ENCODE measurements at regions of chr1 and their contacts with region 1.

Region 1: DNA sequence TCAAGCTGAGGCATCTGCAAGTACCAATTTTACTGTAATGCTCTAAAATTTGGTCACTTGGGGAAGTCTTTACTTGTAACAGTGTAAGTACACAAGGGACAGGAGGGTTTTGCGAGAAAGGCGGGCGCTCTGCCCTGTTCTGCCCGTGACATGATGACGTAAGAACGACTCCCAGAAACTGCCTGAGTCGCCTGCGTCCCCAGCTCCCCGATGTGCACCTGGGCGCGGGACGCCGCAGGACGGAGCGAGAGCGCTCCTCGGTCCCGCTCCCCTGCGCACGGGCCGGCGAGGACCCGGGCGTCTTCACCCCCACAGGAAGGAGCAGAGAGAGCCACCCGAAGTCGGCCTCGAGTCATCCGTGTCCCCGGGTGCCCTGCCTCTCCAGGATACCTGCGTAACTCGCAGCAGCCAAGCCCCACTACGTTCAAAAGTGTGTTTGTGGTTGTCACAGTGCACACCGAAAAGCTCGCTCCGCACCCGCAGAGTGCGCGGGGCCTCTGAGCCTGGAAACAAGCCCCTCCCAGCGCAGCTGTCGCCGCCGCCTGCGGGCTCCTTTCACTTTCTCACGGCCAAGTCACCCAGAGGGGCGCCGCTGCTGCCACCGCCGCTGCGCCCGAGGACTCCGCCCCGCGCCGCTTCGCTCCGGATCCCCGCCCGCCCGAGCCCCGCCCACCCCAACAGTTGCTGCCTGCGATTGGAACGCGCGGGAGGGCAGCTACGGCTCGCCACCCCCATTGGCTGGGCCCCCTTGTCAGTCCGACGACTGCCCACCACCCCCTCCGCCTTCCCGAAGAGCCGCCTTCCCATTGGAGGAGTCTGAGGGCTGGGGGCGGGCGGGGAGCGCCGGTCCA is 3.2 kb upstream of the ZBTB18 start:
- DNase-seq: peak; percentile 95 to 99 (median 97)
- ATAC-seq: peak; percentile 72
- H3K4me3 ChIP-seq: peak overlapping the region; percentile 83
- H3K4me3 Mint-ChIP-seq: peak overlapping the region; percentile 89
- H3K27ac ChIP-seq: peak overlapping the region; percentile 95 to 97
- H3K27ac Mint-ChIP-seq: peak overlapping the region; percentile 98
- H3K4me1 ChIP-seq: peaks cover 40% of the 10 kb centered on the region
- H3K4me1 Mint-ChIP-seq: peaks cover 26% of the 10 kb centered on the region
- H3K27me3 ChIP-seq: no peaks in the 10 kb centered on the region
- H3K27me3 Mint-ChIP-seq: no peaks in the 10 kb centered on the region
- CTCF ChIP-seq: no peak

Region 2: DNA sequence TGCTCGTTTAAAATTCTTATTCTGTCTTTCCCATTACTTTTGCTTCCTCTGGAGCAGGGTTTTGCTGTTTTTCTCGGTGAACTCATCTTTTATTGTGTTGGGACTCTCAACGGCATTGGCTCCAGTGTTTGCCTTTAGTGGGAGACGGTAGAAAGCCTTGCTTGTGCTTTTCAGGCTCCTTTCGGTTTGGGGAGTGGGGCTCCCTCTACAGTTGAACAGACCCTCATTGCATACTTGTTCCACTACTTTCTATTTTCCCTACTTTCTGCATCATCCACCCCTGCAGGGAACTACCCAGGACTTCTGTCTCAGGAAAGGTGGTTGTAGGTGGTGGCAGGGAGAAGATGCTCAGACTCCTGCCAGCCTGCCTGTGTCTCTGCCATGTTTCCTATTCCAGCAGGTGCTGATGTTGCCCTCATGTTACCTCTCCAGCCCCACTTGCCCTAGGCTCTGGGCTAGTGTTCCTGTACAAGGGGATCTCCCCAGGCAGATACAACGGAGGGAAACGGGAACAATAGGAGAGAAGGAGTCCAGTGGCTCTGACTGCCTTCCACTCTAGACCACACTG is 65.3 kb before region 1 on chr1:
- CTCF ChIA-PET with region 1: no interaction called
- POLR2A ChIA-PET with region 1: no interaction called
- intact Hi-C with region 1: loop called in 1 of 2 experiments (anchors 5 kb)
- DNase-seq: no peak
- ATAC-seq: no peak
- H3K4me3 ChIP-seq: no peak overlapping the region
- H3K4me3 Mint-ChIP-seq: no peak overlapping the region
- H3K27ac ChIP-seq: no peak overlapping the region
- H3K27ac Mint-ChIP-seq: no peak overlapping the region
- H3K4me1 ChIP-seq: no peaks in the 10 kb centered on the region
- H3K4me1 Mint-ChIP-seq: no peaks in the 10 kb centered on the region
- H3K27me3 ChIP-seq: no peaks in the 10 kb centered on the region
- H3K27me3 Mint-ChIP-seq: peaks cover 3% of the 10 kb centered on the region
- CTCF ChIP-seq: no peak

Region 3: DNA sequence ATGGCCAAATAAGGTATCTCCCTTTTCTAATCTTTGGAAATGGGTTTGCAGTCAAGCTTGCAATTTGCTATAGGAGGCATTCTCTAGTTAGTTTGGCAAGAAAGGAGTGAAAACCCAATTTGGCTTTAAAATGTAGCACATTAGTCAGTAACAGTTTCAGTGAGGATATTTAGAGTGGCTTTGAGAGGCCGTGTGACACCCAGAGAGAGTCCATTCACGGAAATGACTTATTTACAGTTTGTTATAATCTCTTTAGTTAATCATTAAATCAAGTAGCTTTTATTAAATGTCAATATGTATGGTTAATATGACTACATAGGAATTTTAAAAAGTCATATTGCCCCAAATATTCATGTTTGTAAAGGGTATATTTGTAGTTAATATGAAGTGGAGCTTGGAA is 12.8 kb after region 1 on chr1:
- CTCF ChIA-PET with region 1: interaction called, 4 read pairs
- POLR2A ChIA-PET with region 1: interaction called, 10 read pairs
- intact Hi-C with region 1: no loop called
- DNase-seq: no peak
- ATAC-seq: no peak
- H3K4me3 ChIP-seq: no peak overlapping the region
- H3K4me3 Mint-ChIP-seq: no peak overlapping the region
- H3K27ac ChIP-seq: no peak overlapping the region
- H3K27ac Mint-ChIP-seq: peak overlapping the region; percentile 53
- H3K4me1 ChIP-seq: peaks cover 3% of the 10 kb centered on the region
- H3K4me1 Mint-ChIP-seq: peaks cover 31% of the 10 kb centered on the region
- H3K27me3 ChIP-seq: no peaks in the 10 kb centered on the region
- H3K27me3 Mint-ChIP-seq: no peaks in the 10 kb centered on the region
- CTCF ChIP-seq: no peak

Region 4: DNA sequence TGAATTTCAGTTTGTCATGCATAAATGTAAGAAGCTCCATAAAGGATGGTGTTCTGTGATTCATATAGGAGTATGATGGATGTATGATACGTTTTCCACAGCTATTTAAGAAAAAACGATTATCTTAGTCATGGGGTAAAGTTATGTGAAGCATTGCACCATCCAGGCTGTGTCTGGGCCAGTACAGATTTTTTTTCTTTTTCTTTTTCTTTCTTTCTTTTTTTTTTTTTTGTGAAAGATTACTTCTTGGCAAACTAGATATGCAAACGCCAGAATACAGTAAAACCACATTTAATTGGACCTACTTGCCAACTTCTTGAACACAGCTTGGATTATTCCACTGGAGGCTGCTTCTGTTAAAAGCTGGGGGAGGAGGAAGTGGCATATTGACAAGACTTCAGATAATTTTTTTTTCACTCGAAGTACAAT is 18.1 kb after region 1 on chr1:
- CTCF ChIA-PET with region 1: interaction called, 4 read pairs
- POLR2A ChIA-PET with region 1: interaction called, 17 read pairs
- intact Hi-C with region 1: no loop called
- DNase-seq: no peak
- ATAC-seq: no peak
- H3K4me3 ChIP-seq: no peak overlapping the region
- H3K4me3 Mint-ChIP-seq: no peak overlapping the region
- H3K27ac ChIP-seq: no peak overlapping the region
- H3K27ac Mint-ChIP-seq: no peak overlapping the region
- H3K4me1 ChIP-seq: no peaks in the 10 kb centered on the region
- H3K4me1 Mint-ChIP-seq: peaks cover 11% of the 10 kb centered on the region
- H3K27me3 ChIP-seq: no peaks in the 10 kb centered on the region
- H3K27me3 Mint-ChIP-seq: no peaks in the 10 kb centered on the region
- CTCF ChIP-seq: no peak

Region 5: GRCh38 chr1:244074559-244075171 is 26.8 kb after region 1 on chr1:
- CTCF ChIA-PET with region 1: interaction called, 12 read pairs
- POLR2A ChIA-PET with region 1: interaction called, 96 read pairs
- intact Hi-C with region 1: loop called (anchors 1 kb)
- DNase-seq: peak; percentile 47 to 92 (median 74)
- ATAC-seq: peak; percentile 90
- H3K4me3 ChIP-seq: peak overlapping the region; percentile 38 to 41
- H3K4me3 Mint-ChIP-seq: peak overlapping the region; percentile 80
- H3K27ac ChIP-seq: peak overlapping the region; percentile 66 to 67
- H3K27ac Mint-ChIP-seq: peak overlapping the region; percentile 98
- H3K4me1 ChIP-seq: peaks cover 31% of the 10 kb centered on the region
- H3K4me1 Mint-ChIP-seq: peaks cover 45% of the 10 kb centered on the region
- H3K27me3 ChIP-seq: no peaks in the 10 kb centered on the region
- H3K27me3 Mint-ChIP-seq: no peaks in the 10 kb centered on the region
- CTCF ChIP-seq: no peak

Region 6: DNA sequence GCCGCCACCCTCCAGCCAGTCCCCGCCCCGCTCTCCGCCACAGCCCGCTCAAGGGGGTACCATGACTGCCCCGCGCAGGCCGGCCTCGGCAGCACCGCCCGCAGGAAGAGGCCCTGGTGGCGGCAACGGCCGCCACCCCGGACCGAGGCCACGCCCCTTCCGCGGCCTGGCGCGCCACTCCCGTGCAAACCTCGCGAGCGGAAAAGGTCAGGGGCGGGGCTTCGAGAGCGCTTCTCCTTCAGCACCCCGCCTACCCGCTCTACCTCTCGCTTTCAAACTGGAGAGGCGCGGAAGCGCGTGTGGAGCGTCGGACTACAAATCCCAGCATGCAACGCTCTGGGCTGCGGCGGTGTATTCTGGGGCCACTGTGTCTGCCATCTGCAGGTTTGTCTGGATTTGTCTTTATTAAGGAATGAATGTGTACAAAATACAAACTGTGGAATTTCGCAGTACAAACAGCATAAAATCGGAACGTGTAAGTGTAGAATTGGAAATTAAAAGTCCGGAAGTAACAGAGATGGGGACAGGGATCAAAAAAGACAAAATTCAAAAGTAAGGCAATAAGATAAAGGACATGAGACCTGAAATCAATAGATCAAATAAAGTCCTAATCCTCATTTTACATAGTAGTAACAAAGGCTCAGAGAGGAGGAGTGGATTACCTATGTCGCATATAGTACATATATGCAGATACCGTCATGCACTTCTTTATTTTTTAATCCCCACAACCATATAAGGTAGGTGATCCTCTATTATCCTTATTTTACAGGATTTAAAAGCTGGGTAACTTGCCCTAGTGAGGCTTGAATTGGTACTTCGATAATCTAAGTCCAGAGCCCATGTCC is 404.3 kb after region 1 on chr1:
- CTCF ChIA-PET with region 1: no interaction called
- POLR2A ChIA-PET with region 1: no interaction called
- intact Hi-C with region 1: loop called (anchors 1 to 2 kb)
- DNase-seq: peak; percentile 97 to 100 (median 99)
- ATAC-seq: peak; percentile 83
- H3K4me3 ChIP-seq: peak overlapping the region; percentile 78 to 95
- H3K4me3 Mint-ChIP-seq: peak overlapping the region; percentile 91
- H3K27ac ChIP-seq: peak overlapping the region; percentile 95 to 96
- H3K27ac Mint-ChIP-seq: peak overlapping the region; percentile 97
- H3K4me1 ChIP-seq: peaks cover 32% of the 10 kb centered on the region
- H3K4me1 Mint-ChIP-seq: peaks cover 45% of the 10 kb centered on the region
- H3K27me3 ChIP-seq: no peaks in the 10 kb centered on the region
- H3K27me3 Mint-ChIP-seq: no peaks in the 10 kb centered on the region
- CTCF ChIP-seq: peak; percentile 55

Measured in CD8-positive, alpha-beta T cell (primary cell).